ENCODE measurements at regions of chr13 and their contacts with region 1.

Region 1: GRCh38 chr13:31236211-31236786 is 36.5 kb downstream of the B3GLCT start:
- DNase-seq: peak in 3 of 14 experiments; percentile 17 to 34 (median 26)
- ATAC-seq: no peak
- H3K4me3 ChIP-seq: no peak overlapping the region
- H3K4me3 Mint-ChIP-seq: no peak overlapping the region
- H3K27ac ChIP-seq: no peak overlapping the region
- H3K27ac Mint-ChIP-seq: no peak overlapping the region
- H3K4me1 ChIP-seq: no peaks in the 10 kb centered on the region
- H3K4me1 Mint-ChIP-seq: no peaks in the 10 kb centered on the region
- H3K27me3 ChIP-seq: no peaks in the 10 kb centered on the region
- H3K27me3 Mint-ChIP-seq: no peaks in the 10 kb centered on the region
- CTCF ChIP-seq: peak; percentile 62

Region 2: GRCh38 chr13:31424117-31424729 is 187.9 kb after region 1 on chr13:
- CTCF ChIA-PET with region 1: no interaction called
- POLR2A ChIA-PET with region 1: no interaction called
- intact Hi-C with region 1: loop called (anchors 5 kb)
- DNase-seq: peak; percentile 5 to 62 (median 30)
- ATAC-seq: peak; percentile 48
- H3K4me3 ChIP-seq: no peak overlapping the region
- H3K4me3 Mint-ChIP-seq: no peak overlapping the region
- H3K27ac ChIP-seq: no peak overlapping the region
- H3K27ac Mint-ChIP-seq: no peak overlapping the region
- H3K4me1 ChIP-seq: peaks cover 4% of the 10 kb centered on the region
- H3K4me1 Mint-ChIP-seq: no peaks in the 10 kb centered on the region
- H3K27me3 ChIP-seq: no peaks in the 10 kb centered on the region
- H3K27me3 Mint-ChIP-seq: peaks cover 32% of the 10 kb centered on the region
- CTCF ChIP-seq: peak; percentile 68

Region 3: DNA sequence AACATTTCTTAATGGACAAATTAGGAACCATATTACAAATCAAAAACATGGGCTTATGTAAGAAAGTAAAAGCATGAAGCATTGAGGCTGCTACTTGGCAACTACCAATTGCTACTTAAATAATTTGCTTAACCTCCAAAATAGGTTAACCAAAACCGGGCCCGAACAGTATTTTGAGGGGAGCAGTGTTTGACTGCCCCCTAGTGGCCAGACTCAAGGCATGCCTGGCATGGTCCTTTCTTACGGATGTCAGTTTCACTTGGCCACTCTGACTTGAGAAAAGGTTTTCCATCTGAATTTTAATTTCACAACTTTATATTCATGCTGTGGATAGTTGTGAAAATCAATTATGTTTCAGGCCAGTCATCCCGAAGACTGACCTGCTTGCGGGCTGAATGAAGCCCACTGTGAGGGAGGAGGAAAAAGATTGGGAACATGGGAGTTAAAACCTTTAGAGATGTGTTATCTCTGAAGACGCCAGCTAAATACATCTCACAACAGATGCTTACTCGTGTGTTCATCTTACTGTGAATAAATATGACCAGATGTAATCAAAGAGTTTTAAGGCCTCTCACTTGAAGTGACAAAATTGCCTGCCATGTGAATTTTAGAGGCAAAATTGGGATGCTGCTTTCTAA is 505.9 kb after region 1 on chr13:
- CTCF ChIA-PET with region 1: no interaction called
- POLR2A ChIA-PET with region 1: no interaction called
- intact Hi-C with region 1: loop called in 1 of 2 experiments (anchors 5 kb)
- DNase-seq: peak; percentile 29 to 78 (median 50)
- ATAC-seq: peak; percentile 68
- H3K4me3 ChIP-seq: no peak overlapping the region
- H3K4me3 Mint-ChIP-seq: no peak overlapping the region
- H3K27ac ChIP-seq: no peak overlapping the region
- H3K27ac Mint-ChIP-seq: no peak overlapping the region
- H3K4me1 ChIP-seq: no peaks in the 10 kb centered on the region
- H3K4me1 Mint-ChIP-seq: peaks cover 4% of the 10 kb centered on the region
- H3K27me3 ChIP-seq: no peaks in the 10 kb centered on the region
- H3K27me3 Mint-ChIP-seq: peaks cover 22% of the 10 kb centered on the region
- CTCF ChIP-seq: peak; percentile 99

Measured in CD4-positive, alpha-beta T cell (primary cell).